GM23248 (cell line): ENCODE measurements at regions of chrX and their contacts with region 1.

Region 1: DNA sequence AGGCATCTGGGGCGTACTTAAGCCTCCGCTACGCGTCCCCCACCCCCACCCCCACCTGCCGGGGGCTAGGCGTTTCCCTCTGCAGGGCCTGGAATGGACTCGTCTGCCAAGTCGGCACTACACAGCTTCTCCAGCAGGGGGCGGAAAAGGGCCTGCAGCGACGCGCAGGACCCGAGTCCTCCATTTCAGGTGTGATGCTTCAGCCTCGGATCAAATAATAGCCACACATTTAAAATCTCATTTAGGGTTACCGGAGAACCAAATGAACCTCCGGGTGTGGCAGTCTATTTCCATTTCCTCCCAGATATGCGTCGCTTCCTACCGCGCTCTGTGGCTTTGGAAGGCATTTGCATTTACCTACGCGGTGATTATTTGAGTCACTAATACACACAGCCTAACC is 2.9 kb downstream of the PAK3 start:
- DNase-seq: peak; percentile 1
- H3K4me3 ChIP-seq: no peak overlapping the region
- H3K27ac ChIP-seq: no peak overlapping the region
- H3K4me1 ChIP-seq: no peaks in the 10 kb centered on the region
- H3K27me3 ChIP-seq: no peaks in the 10 kb centered on the region; the same call in 1 of the 2 replicates

Region 2: DNA sequence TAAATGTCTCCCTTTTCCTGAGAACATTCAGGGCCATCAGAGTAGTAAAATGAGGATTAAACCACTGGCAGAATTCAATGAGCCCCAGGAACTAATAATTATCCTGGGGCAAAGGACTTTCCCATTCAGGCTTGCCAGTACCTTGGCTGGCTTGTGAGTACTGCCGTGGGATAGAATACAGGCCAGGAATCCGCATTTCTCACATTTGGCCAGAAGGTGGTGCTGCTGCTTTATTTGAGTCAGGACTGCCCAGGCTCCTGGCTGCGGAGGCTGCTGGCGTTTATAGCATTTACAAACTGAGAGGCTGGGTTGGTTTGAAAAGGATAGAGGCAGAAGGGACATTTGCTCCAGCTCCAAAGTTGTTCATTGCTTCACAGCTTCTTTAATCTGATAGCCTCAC is 648.8 kb before region 1 on chrX:
- in situ Hi-C with region 1: loop called (anchors 25 kb)
- DNase-seq: peak; percentile 70
- H3K4me3 ChIP-seq: no peak overlapping the region
- H3K27ac ChIP-seq: no peak overlapping the region
- H3K4me1 ChIP-seq: no peaks in the 10 kb centered on the region
- H3K27me3 ChIP-seq: no peaks in the 10 kb centered on the region

Region 3: GRCh38 chrX:110853610-110854009 is 245.3 kb before region 1 on chrX:
- in situ Hi-C with region 1: loop called (anchors 10 kb)
- DNase-seq: peak; percentile 53
- H3K4me3 ChIP-seq: no peak overlapping the region
- H3K27ac ChIP-seq: no peak overlapping the region
- H3K4me1 ChIP-seq: peaks cover 5% of the 10 kb centered on the region; the same call in 1 of the 2 replicates
- H3K27me3 ChIP-seq: no peaks in the 10 kb centered on the region

Region 4: GRCh38 chrX:110964786-110965185 is 134.1 kb before region 1 on chrX:
- in situ Hi-C with region 1: no loop called
- DNase-seq: no peak
- H3K4me3 ChIP-seq: no peak overlapping the region
- H3K27ac ChIP-seq: no peak overlapping the region
- H3K4me1 ChIP-seq: no peaks in the 10 kb centered on the region
- H3K27me3 ChIP-seq: no peaks in the 10 kb centered on the region

Region 5: GRCh38 chrX:111200327-111200726 is 101.5 kb after region 1 on chrX:
- in situ Hi-C with region 1: no loop called
- DNase-seq: no peak
- H3K4me3 ChIP-seq: no peak overlapping the region
- H3K27ac ChIP-seq: no peak overlapping the region
- H3K4me1 ChIP-seq: no peaks in the 10 kb centered on the region
- H3K27me3 ChIP-seq: no peaks in the 10 kb centered on the region